ENCODE measurements at regions of chr9 and their contacts with region 1.

Region 1: DNA sequence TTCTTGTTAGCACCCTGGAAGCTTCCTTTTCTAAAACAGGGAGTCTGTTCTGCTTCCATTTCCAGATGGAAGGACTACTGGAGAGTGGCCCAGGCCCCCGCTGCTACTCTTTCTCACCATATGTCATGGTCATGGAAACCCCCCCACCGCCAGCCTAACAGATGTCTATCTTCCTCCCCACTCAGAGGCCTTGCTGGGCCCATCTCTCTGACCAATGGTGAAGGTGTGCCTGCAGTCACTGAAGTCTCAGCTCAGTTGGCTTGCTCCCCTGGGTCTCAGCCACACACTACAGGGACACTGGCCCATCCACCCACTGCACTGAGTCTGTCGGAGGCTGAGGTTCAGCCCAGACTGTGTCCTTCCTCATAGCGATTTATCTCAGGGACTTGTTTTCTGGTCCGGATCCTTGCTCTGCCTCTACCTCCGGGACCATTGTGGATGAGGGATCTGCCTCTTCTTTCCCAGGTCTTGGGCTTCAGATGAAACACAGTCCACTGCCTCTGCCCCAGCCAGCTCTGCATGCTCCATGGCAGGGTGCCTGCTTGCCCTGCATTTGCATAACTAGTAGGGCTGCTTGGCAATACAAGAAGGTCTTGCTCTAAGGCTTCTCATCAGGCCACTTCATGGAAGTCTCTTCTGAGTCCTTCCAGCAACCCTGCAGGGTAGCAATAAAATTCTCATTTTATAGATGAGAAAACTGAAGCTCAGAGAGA is 30.8 kb downstream of the GALNT12 start:
- DNase-seq: no peak
- H3K4me3 ChIP-seq: no peak overlapping the region
- H3K27ac ChIP-seq: no peak overlapping the region
- H3K4me1 ChIP-seq: no peaks in the 10 kb centered on the region
- H3K27me3 ChIP-seq: no peaks in the 10 kb centered on the region
- CTCF ChIP-seq: no peak

Region 2: DNA sequence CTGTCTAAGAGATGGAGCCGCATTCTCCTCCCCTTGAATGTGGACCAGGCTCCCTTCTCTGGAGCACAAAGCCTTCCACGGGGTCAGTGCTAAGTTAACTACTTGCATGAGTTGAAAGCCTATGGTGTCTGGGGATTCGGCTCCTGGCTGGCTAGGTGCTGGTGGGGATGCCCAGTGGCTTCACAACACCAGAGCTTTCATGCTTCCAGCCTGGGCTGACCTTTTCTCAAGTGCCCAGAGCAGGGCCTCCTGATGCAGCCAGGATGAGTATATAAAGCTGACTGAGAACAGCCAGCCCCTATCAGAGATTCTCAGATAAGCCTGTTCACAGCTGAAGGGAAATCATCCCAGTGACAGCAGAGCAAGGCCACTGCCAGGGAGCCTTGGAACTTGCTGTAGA is 19.1 kb before region 1 on chr9:
- CTCF ChIA-PET with region 1: no interaction called
- POLR2A ChIA-PET with region 1: interaction called, 13 read pairs
- intact Hi-C with region 1: no loop called
- DNase-seq: no peak
- H3K4me3 ChIP-seq: no peak overlapping the region
- H3K27ac ChIP-seq: no peak overlapping the region
- H3K4me1 ChIP-seq: no peaks in the 10 kb centered on the region
- H3K27me3 ChIP-seq: no peaks in the 10 kb centered on the region
- CTCF ChIP-seq: no peak

Region 3: DNA sequence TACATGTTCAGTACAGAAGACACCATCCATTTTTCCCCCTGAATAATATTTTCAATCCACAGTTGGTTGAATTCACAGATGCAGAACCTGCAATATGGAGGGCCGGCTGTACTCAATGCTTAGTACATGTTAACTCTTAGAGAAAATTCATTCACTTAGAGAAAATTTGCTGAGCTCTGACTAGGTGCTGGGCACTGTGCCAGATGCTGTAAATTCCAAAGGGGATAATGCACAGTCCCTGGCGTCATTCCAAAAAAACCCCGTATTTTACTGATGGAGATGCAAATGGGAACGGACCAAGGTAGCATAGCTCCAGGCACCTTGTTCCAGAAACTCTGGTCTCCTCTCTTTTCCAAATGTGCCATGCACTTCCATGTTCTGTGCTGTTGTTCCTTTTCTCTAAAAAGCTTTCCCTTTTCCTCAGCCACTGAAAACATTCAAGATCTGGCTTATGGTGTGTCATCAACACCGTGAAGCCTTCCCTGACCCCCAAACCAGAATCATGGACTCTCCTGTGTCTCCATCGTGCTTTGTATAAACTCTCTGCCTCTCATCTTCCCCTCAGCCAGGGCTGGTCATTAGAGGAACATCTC is 49.7 kb after region 1 on chr9:
- CTCF ChIA-PET with region 1: no interaction called
- POLR2A ChIA-PET with region 1: no interaction called
- intact Hi-C with region 1: no loop called
- DNase-seq: no peak
- H3K4me3 ChIP-seq: no peak overlapping the region
- H3K27ac ChIP-seq: no peak overlapping the region
- H3K4me1 ChIP-seq: no peaks in the 10 kb centered on the region
- H3K27me3 ChIP-seq: peaks cover 44% of the 10 kb centered on the region
- CTCF ChIP-seq: no peak